ENCODE measurements at regions of chr1 and their contacts with region 1.

Region 1: GRCh38 chr1:6489799-6490180 is 1.7 kb downstream of the PLEKHG5 start:
- DNase-seq: peak; percentile 91
- ATAC-seq: peak; percentile 41
- H3K4me3 ChIP-seq: peak overlapping the region; percentile 89
- H3K27ac ChIP-seq: peak overlapping the region; percentile 97
- H3K4me1 ChIP-seq: peaks cover 51% of the 10 kb centered on the region
- H3K27me3 ChIP-seq: no peaks in the 10 kb centered on the region
- CTCF ChIP-seq: peak; percentile 99

Region 2: GRCh38 chr1:6509919-6510291 is 20.1 kb after region 1 on chr1:
- CTCF ChIA-PET with region 1: no interaction called
- POLR2A ChIA-PET with region 1: no interaction called
- intact Hi-C with region 1: no loop called
- DNase-seq: no peak
- ATAC-seq: no peak
- H3K4me3 ChIP-seq: no peak overlapping the region
- H3K27ac ChIP-seq: no peak overlapping the region
- H3K4me1 ChIP-seq: no peaks in the 10 kb centered on the region
- H3K27me3 ChIP-seq: no peaks in the 10 kb centered on the region
- CTCF ChIP-seq: no peak

Region 3: GRCh38 chr1:6523566-6523965 is 33.8 kb after region 1 on chr1:
- CTCF ChIA-PET with region 1: interaction called, 5 read pairs
- POLR2A ChIA-PET with region 1: no interaction called
- intact Hi-C with region 1: loop called (anchors 1 kb)
- DNase-seq: peak; percentile 81
- ATAC-seq: peak; percentile 75
- H3K4me3 ChIP-seq: no peak overlapping the region
- H3K27ac ChIP-seq: no peak overlapping the region
- H3K4me1 ChIP-seq: peaks cover 7% of the 10 kb centered on the region; the same call in 1 of the 2 replicates
- H3K27me3 ChIP-seq: no peaks in the 10 kb centered on the region
- CTCF ChIP-seq: peak; percentile 92

Region 4: GRCh38 chr1:6554031-6554906 is 64.5 kb after region 1 on chr1 and contains the start of gene NOL9:
- CTCF ChIA-PET with region 1: no interaction called
- POLR2A ChIA-PET with region 1: no interaction called
- intact Hi-C with region 1: loop called (anchors 1 kb)
- DNase-seq: peak; percentile 98
- ATAC-seq: peak; percentile 96
- H3K4me3 ChIP-seq: peak within 1 kb of the TSS; percentile 89
- H3K27ac ChIP-seq: no peak within 1 kb of the TSS
- H3K4me1 ChIP-seq: peaks cover 12% of the 10 kb centered on the region
- H3K27me3 ChIP-seq: no peaks in the 10 kb centered on the region
- CTCF ChIP-seq: peak; percentile 97
- total RNA-seq, gene NOL9: 79.1 and 102 TPM in 2 replicates

Region 5: GRCh38 chr1:6624710-6625583 is 135.2 kb after region 1 on chr1 and contains the start of gene THAP3:
- CTCF ChIA-PET with region 1: no interaction called
- POLR2A ChIA-PET with region 1: no interaction called
- intact Hi-C with region 1: loop called (anchors 5 kb)
- DNase-seq: peak; percentile 86
- ATAC-seq: peak; percentile 84
- H3K4me3 ChIP-seq: peak within 1 kb of the TSS; percentile 89
- H3K27ac ChIP-seq: peak within 1 kb of the TSS; percentile 8
- H3K4me1 ChIP-seq: peaks cover 13% of the 10 kb centered on the region
- H3K27me3 ChIP-seq: no peaks in the 10 kb centered on the region
- CTCF ChIP-seq: no peak
- total RNA-seq, gene THAP3: 42.4 and 54.6 TPM in 2 replicates